HEK293 (cell line): ENCODE measurements at regions of chr19 and their contacts with region 1.

Region 1: DNA sequence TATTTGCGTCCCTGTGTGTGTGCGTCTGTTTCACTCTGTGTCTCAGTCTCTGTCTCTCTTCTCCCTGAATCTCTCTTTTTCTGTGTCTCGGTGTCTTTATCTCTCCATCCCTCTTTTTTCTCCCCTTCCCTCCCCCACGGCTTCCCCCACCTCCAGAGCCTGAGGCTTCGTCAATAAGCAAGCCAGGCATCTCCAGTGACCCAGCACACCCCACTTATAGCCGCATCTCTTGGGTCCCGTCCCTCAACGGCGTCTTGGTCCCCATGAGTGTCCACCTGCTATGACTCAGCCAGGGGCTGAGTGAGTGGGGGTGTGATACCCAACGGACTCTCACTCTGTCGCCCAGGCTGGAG is 10.7 kb upstream of the TINCR start:
- H3K4me3 ChIP-seq: no peak overlapping the region
- H3K27ac ChIP-seq: no peak overlapping the region
- H3K4me1 ChIP-seq: peaks cover 6% of the 10 kb centered on the region; the same call in 1 of the 2 replicates
- CTCF ChIP-seq: no peak

Region 2: DNA sequence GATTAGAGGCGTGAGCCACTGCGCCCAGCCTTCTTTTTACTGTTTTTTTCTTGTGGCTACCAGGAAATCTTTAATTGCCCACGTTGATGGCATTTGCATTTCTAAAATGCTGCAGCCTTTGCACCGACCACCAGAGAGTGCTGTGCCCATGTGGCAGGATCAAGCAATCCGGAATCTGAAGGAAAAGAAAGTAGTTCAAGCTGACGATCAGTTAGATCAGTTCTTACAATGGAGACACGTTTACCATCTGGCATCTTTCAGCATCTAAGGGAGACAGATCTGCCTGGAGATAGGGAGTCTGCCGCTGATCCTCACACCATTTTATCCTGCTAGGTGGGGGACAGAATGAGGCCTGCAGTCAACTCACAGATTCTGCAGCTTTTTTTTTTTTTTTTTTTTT is 30.6 kb before region 1 on chr19:
- CTCF ChIA-PET with region 1: interaction called, 20 read pairs
- POLR2A ChIA-PET with region 1: no interaction called
- H3K4me3 ChIP-seq: no peak overlapping the region
- H3K27ac ChIP-seq: no peak overlapping the region
- H3K4me1 ChIP-seq: no peaks in the 10 kb centered on the region
- CTCF ChIP-seq: peak; percentile 71; the same call in 1 of the 2 replicates